Mammary epithelial cell (primary cell): ENCODE measurements at regions of chr15 and their contacts with region 1.

Region 1: DNA sequence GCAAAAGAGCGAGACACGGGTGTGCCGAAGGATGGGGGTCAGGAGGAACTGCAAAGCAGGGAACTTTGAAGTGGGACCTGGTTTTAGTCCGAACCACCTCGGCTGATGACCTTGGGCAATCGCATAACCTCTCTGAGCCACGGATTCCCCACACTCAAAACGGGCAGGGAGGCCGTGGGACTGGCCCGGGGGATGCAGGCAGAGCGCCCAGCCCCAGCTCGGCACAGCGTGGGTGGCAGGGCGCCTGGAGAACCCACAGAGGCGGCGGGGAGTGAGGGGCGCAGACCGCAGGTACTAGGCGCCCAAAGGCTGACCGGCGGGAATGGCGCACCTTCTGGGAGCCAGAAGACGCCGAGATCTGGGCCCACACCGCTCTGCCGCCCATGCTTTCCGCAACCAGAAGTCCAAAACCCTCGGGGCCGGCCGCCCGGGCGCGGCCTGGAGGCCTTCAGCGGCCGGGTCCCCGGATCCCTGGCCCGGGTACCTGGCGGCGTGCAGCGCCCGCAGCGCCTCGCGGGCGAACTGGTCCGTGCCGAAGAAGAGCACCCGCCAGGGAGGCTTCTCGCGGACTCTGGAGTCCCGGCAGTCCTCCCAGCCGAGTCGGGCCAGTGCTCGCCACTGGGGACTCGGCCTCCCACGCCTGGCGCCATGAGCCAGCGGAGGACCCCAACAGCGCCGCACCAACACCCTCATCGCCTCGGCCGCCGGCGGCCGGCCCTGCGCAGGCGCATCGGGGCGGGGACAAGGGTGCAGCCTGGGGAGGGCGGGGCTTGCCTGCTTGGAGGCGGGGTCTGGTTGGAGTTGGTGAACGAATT is at the start of gene MTFMT:
- DNase-seq: peak; percentile 77
- H3K4me3 ChIP-seq: peak within 1 kb of the TSS; percentile 66 to 89 (median 87)
- H3K27ac ChIP-seq: peak within 1 kb of the TSS; percentile 54
- H3K4me1 ChIP-seq: peaks cover 17% of the 10 kb centered on the region
- H3K27me3 ChIP-seq: no peaks in the 10 kb centered on the region
- CTCF ChIP-seq: peak in 1 of 2 donors; percentile 17
- total RNA-seq, gene MTFMT: 22.5 to 27.2 TPM

Region 2: GRCh38 chr15:64731012-64731806 is 297.9 kb before region 1 on chr15:
- CTCF ChIA-PET with region 1: no interaction called
- dilution Hi-C with region 1: no loop called
- in situ Hi-C with region 1: no loop called
- intact Hi-C with region 1: loop called (anchors 1 kb)
- DNase-seq: peak; percentile 72
- H3K4me3 ChIP-seq: no peak overlapping the region
- H3K27ac ChIP-seq: no peak overlapping the region
- H3K4me1 ChIP-seq: no peaks in the 10 kb centered on the region
- H3K27me3 ChIP-seq: no peaks in the 10 kb centered on the region
- CTCF ChIP-seq: peak; percentile 80 to 91

Region 3: GRCh38 chr15:65054333-65055200 is 25.4 kb after region 1 on chr15:
- CTCF ChIA-PET with region 1: interaction called, 15 read pairs
- dilution Hi-C with region 1: no loop called
- in situ Hi-C with region 1: no loop called
- intact Hi-C with region 1: loop called (anchors 1 kb)
- DNase-seq: peak; percentile 46
- H3K4me3 ChIP-seq: no peak overlapping the region
- H3K27ac ChIP-seq: no peak overlapping the region
- H3K4me1 ChIP-seq: peaks cover 11% of the 10 kb centered on the region
- H3K27me3 ChIP-seq: no peaks in the 10 kb centered on the region
- CTCF ChIP-seq: peak; percentile 93 to 96

Region 4: DNA sequence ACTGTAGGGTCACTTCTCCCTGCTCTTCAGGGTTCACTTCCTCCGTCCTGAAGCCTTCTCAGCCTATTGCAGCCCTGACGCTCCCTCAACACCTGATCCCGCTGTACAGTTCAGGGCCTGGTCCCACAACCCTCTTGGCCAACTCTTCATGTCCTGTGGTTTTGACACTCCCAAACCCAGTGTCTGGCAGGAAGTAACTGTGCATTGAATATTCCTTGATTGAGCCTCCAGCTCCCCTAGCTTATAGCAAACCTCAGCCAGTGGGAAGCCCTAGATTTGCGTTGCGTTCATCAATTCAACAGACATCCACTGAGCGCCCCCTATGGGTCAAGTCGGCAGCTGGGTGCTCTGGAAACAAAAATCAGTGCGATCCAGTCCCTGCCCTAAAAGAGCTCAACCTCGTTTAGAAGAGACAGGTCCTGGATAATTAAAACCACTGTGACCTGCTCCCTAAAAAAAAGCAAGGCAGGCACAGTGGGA is 72.3 kb after region 1 on chr15:
- CTCF ChIA-PET with region 1: interaction called, 3 read pairs
- dilution Hi-C with region 1: no loop called
- in situ Hi-C with region 1: no loop called
- intact Hi-C with region 1: loop called (anchors 1 kb)
- DNase-seq: peak; percentile 40
- H3K4me3 ChIP-seq: no peak overlapping the region
- H3K27ac ChIP-seq: no peak overlapping the region
- H3K4me1 ChIP-seq: no peaks in the 10 kb centered on the region
- H3K27me3 ChIP-seq: no peaks in the 10 kb centered on the region
- CTCF ChIP-seq: peak; percentile 86 to 91

Region 5: GRCh38 chr15:65275728-65276126 is 246.6 kb after region 1 on chr15:
- CTCF ChIA-PET with region 1: no interaction called
- dilution Hi-C with region 1: no loop called
- in situ Hi-C with region 1: loop called (anchors 25 kb)
- intact Hi-C with region 1: loop called (anchors 1 kb)
- DNase-seq: no peak
- H3K4me3 ChIP-seq: no peak overlapping the region
- H3K27ac ChIP-seq: no peak overlapping the region
- H3K4me1 ChIP-seq: no peaks in the 10 kb centered on the region
- H3K27me3 ChIP-seq: no peaks in the 10 kb centered on the region
- CTCF ChIP-seq: no peak

Region 6: DNA sequence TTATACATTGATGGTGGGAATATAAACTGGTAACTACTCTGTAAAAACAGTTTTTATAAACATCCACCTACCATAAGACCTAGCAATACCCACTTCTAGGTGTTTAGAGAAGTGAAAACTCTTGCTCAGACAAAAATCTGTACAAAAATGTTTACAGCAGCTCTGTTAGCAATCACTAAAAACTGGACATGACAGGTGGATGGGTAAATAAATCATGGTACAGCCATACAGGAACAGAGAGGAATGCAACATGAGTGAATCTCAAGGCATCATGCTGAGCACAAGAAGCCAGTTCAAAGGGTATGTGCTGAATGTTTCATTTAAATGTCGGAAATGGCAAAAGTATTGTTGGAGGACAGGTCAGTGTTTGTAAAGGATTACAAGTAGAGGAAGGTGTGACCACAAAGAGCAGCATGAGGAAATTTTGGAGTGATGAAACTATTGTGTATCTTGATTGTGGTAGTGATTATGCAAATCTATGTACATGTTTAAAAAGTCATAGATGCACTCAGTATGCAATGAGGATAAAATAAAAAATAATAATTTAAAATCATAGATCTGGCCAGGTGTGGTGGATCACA is 263.9 kb after region 1 on chr15:
- CTCF ChIA-PET with region 1: interaction called, 4 read pairs
- dilution Hi-C with region 1: no loop called
- in situ Hi-C with region 1: loop called (anchors 25 kb)
- intact Hi-C with region 1: loop called (anchors 1 kb)
- DNase-seq: no peak
- H3K4me3 ChIP-seq: no peak overlapping the region
- H3K27ac ChIP-seq: no peak overlapping the region
- H3K4me1 ChIP-seq: peaks cover 3% of the 10 kb centered on the region
- H3K27me3 ChIP-seq: no peaks in the 10 kb centered on the region
- CTCF ChIP-seq: no peak

Region 7: DNA sequence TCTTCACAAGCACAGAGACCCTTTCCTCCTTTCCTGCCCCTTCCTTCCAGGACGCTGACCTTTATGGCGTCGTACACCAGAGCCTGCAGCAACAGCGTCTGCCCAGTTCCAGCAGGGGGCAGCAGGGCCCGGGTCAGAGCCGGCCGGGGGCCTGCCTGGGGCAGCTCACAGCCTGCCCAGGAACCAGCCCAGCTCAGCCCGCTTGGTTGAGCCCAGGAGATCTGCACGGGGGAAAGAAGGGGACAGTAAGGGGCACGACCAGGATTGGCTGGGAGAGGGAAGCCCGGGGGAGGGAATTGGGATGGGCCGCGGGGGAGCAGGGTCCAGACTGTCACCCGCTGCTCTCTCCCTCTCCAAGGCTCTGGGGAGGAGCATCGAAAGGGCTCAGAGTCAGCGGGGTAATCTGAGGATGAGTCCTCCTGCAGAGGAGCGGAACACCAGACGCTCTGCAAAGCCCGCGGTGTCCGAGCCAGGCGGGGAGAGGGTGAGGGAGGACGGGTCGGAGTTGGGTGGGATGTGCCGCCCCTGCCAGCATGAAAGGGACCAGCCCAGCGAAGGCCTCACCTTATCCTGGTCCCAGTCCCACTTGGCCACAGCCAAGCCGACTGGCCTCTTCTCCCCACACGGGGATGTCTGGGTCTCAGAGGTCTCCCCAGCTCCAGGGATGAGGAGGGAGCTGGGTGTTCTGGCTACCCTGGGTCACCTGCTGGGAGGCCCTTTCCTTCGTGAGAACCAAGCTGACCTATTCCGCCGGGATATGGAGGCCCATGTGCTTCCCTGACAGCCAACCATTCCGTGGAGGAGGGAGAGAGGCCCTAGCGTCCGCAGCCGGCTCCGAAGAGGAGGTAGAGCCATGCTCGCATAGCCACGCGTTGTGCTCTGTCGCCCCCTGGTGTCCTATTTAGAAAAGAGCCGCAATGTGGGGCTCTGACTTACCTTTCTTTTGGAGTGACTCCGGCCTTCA is 356.0 kb after region 1 on chr15:
- CTCF ChIA-PET with region 1: no interaction called
- dilution Hi-C with region 1: no loop called
- in situ Hi-C with region 1: no loop called
- intact Hi-C with region 1: loop called (anchors 5 kb)
- DNase-seq: peak; percentile 73
- H3K4me3 ChIP-seq: peak overlapping the region in 2 of 3 experiments; percentile 22 to 30
- H3K27ac ChIP-seq: no peak overlapping the region
- H3K4me1 ChIP-seq: peaks cover 11% of the 10 kb centered on the region
- H3K27me3 ChIP-seq: peaks cover 4% of the 10 kb centered on the region
- CTCF ChIP-seq: peak; percentile 83 to 93